Activated naive CD4-positive, alpha-beta T cell treated with anti-CD3 and anti-CD28 coated beads for 36 hours (primary cell): ENCODE measurements at regions of chr10 and their contacts with region 1.

Region 1: DNA sequence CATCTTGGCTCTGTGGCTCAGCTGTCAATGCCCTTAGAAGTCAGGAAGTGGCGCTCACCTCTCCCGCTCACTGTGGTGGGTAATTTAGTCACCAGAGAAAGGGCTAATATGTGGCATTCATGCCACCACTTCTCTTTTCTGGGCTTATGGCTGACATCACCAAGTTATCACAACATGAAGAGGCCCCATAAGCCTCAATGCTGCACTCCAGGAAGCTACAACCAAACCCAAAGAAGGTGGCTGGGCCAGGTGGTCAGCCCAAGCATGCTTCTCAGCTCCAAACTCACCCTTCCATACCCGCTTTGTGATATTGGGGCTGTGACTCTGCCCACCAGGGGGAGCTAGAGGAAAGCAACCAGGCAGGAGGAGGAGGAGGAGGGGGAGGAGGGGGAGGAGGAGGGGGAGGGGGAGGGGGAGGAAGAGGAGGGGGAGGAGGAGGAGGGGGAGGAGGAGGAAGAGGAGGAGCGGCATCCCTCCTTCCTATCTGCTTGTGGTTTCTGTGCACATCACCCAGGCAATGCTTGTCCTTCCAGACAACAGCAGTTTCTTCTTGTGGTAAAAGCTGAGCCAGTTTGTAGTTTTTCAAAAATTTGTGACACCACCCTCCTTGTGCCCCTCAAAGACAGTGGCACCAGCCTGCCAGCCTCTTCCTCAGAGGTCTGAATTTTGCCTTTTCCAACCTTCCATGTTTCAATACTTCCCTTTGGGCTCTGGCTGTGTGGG is 42.1 kb downstream of the CYP26A1 start:
- DNase-seq: peak; percentile 86
- H3K4me3 Mint-ChIP-seq: no peak overlapping the region
- H3K27ac Mint-ChIP-seq: no peak overlapping the region
- H3K4me1 Mint-ChIP-seq: peaks cover 11% of the 10 kb centered on the region
- H3K27me3 Mint-ChIP-seq: no peaks in the 10 kb centered on the region

Region 2: GRCh38 chr10:93126484-93127052 is 10.7 kb after region 1 on chr10:
- CTCF ChIA-PET with region 1: interaction called, 17 read pairs
- intact Hi-C with region 1: no loop called
- DNase-seq: peak; percentile 12
- H3K4me3 Mint-ChIP-seq: no peak overlapping the region
- H3K27ac Mint-ChIP-seq: no peak overlapping the region
- H3K4me1 Mint-ChIP-seq: peaks cover 27% of the 10 kb centered on the region
- H3K27me3 Mint-ChIP-seq: no peaks in the 10 kb centered on the region

Region 3: DNA sequence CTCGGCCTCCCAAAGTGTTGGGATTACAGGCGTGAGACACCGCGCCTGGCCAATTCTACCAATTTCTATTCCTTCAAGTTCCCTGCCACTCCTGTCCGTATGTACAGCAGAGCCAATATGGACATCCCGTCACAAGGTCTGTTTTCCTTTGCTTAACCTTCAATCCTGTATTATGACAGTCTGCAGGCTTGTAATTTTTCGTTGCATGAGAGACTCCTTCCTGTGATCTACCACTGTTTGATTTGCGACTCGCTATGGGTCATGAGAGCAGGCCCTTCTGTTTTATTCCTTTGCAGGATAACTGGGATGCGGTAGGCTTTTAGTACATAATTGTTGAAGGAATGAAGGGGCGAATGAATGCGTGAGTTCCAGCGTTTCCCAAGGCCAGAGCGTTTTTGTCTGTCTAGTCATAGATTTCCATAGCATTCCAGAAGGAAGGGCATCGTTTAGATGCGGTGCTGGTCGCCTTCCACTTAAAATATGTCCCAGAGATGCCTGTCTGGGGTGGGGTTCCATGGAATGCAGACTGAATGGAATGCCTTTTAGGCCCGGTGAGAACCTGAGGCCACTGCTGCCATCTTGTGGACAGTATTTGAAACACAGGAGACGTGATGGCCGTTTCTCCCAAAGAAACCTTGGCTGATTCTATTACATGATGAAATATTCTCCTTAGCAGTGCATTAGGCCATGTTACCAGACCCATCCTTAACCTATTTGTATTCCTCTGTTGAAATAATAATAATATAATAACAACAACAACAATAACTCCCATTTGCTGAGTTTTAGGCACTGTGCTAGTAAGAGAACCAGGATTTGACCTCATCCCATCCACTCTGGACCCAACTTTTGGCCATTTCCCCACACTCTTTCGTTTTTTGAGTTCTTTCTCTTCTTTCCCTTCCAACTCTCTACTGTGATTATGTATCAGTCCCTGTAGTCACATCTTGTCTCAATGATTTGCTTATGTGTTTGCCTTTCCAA is 173.1 kb after region 1 on chr10:
- CTCF ChIA-PET with region 1: interaction called, 23 read pairs
- intact Hi-C with region 1: loop called (anchors 1 kb)
- DNase-seq: peak; percentile 73
- H3K4me3 Mint-ChIP-seq: no peak overlapping the region
- H3K27ac Mint-ChIP-seq: peak overlapping the region; percentile 10
- H3K4me1 Mint-ChIP-seq: no peaks in the 10 kb centered on the region
- H3K27me3 Mint-ChIP-seq: no peaks in the 10 kb centered on the region

Region 4: DNA sequence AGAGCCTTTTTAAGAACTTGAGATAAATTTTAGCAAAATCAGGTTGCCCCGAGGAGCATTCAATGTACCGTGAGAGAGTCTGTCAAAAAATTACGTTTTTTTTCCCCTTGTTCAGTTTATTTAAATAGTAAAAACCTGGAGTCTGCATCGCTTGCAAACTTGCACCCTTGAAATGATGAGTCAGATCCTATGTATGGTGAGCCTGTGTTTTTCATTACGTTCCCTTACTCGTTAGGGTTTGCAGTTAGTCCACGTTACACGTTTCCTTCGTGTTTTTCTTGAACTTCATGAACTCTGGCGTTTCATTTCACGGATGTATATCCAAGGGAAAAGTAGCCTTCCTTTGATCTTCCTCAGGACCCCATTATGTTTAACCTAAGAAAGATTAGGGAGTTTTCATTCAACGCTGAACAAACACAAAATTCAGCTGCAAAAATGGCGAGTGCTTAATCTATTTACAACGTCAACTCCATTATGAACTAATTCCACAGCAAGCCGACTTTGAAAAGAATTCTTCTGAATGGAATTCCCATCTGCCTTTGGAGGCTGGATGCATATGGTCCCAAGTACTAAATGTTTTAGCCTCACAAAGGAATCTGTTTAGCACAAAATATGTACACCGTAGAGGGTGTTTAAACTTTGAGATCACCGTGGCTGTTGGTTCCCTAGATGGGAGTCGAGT is 183.9 kb after region 1 on chr10:
- CTCF ChIA-PET with region 1: no interaction called
- intact Hi-C with region 1: no loop called
- DNase-seq: no peak
- H3K4me3 Mint-ChIP-seq: no peak overlapping the region
- H3K27ac Mint-ChIP-seq: no peak overlapping the region
- H3K4me1 Mint-ChIP-seq: no peaks in the 10 kb centered on the region
- H3K27me3 Mint-ChIP-seq: no peaks in the 10 kb centered on the region